ENCODE measurements at regions of chr6 and their contacts with region 1.

Region 1: DNA sequence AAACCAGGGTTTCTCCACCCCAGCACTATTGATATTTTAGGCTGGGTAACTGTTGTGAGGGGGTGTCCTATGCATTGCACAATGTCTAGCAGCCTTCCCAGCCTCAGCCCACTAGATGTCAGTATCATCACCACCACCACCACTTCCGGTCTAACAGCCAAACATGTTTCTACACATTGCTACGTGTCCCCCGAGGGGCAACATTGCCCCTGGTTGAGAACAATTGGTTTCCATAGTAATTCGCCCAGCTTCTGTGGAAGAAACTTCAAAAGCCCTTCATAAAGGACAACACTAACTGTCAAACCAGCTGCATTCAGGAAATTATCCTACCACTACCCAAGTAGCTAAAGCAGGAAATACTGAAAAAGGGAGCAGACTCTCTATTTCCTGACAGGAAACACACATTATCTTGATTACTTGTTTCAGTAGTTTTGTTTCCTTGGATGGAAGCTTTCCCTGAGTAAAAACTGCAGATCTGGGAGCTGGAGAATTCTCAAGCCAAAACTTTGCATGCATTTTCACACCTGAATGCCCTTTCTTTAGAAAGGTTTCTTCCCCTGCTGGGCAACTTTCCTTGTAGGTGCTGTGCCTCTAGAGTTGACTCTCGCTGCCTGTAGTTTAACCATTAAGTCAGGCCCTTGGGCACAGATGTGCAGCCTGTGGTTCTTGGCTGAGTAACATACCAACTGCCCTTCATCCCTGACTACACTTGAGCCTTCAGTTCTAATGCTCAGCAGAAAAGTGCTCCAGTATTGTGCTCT is 23.6 kb downstream of the PKHD1 start:
- H3K4me3 Mint-ChIP-seq: no peak overlapping the region
- H3K27ac Mint-ChIP-seq: no peak overlapping the region
- H3K4me1 Mint-ChIP-seq: peaks cover 4% of the 10 kb centered on the region
- H3K27me3 Mint-ChIP-seq: no peaks in the 10 kb centered on the region

Region 2: GRCh38 chr6:52263709-52264540 is 200.2 kb after region 1 on chr6:
- intact Hi-C with region 1: loop called (anchors 5 kb)
- H3K4me3 Mint-ChIP-seq: no peak overlapping the region
- H3K27ac Mint-ChIP-seq: no peak overlapping the region
- H3K4me1 Mint-ChIP-seq: no peaks in the 10 kb centered on the region
- H3K27me3 Mint-ChIP-seq: no peaks in the 10 kb centered on the region

Measured in dendritic cell treated with granulocyte-macrophage colony-stimulating factor and Interleukin-4, amounts not matched to agents 40 ng/mL and 50 ng/mL, for 4 days (primary cell).